Mammary epithelial cell (primary cell): ENCODE measurements at regions of chr10 and their contacts with region 1.

Region 1: GRCh38 chr10:21173812-21174714 is 277.0 kb upstream of the NEBL start:
- DNase-seq: peak; percentile 83
- H3K4me3 ChIP-seq: peak overlapping the region; percentile 55 to 70 (median 64)
- H3K27ac ChIP-seq: peak overlapping the region; percentile 27
- H3K4me1 ChIP-seq: peaks cover 15% of the 10 kb centered on the region
- H3K27me3 ChIP-seq: no peaks in the 10 kb centered on the region
- CTCF ChIP-seq: peak in 1 of 2 donors; percentile 3

Region 2: DNA sequence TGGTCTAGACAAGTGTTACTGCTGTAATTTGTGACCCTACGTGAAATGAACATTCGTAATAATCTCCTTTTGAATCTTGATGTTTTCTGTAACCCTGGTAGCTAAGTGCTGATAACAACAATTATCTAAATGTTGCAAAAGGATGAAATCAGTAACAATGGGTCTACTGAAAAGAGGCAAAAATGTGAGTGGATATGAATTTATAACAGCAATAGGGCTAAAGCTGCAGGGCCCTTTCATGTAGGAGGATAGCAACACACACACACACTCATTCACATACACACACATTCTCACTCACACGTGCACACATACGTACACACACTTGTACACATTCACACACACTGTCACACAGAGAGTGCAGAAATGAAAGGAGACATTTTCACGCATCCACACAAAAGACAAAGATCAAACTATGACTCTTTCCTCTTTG is 76.1 kb before region 1 on chr10:
- CTCF ChIA-PET with region 1: no interaction called
- dilution Hi-C with region 1: no loop called
- in situ Hi-C with region 1: no loop called
- intact Hi-C with region 1: loop called (anchors 2 kb)
- DNase-seq: no peak
- H3K4me3 ChIP-seq: no peak overlapping the region
- H3K27ac ChIP-seq: no peak overlapping the region
- H3K4me1 ChIP-seq: peaks cover 3% of the 10 kb centered on the region
- H3K27me3 ChIP-seq: no peaks in the 10 kb centered on the region
- CTCF ChIP-seq: no peak

Region 3: DNA sequence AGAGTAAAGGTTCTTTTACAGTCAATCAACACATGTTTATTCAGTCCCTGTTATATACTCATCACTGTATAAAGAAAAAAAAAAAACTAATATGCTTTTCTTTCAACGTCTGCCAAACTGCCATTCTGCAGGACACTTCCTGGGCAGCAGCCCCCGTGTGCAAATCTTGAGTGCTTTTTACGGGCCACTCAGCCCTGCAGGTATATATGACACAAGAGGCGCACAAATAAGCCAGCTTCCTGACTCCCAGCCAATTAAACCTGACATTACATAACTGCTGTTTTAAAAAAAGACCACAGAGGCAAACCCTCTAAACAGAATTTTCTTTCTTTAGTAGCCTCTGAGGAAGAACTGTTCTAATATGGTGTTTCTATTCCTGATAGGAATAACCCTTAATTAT is 13.9 kb before region 1 on chr10:
- CTCF ChIA-PET with region 1: no interaction called
- dilution Hi-C with region 1: no loop called
- in situ Hi-C with region 1: no loop called
- intact Hi-C with region 1: no loop called
- DNase-seq: no peak
- H3K4me3 ChIP-seq: no peak overlapping the region
- H3K27ac ChIP-seq: no peak overlapping the region
- H3K4me1 ChIP-seq: no peaks in the 10 kb centered on the region
- H3K27me3 ChIP-seq: peaks cover 2% of the 10 kb centered on the region
- CTCF ChIP-seq: no peak

Region 4: GRCh38 chr10:21265621-21266020 is 91.6 kb after region 1 on chr10:
- CTCF ChIA-PET with region 1: no interaction called
- dilution Hi-C with region 1: no loop called
- in situ Hi-C with region 1: loop called in 1 of 2 experiments (anchors 5 kb)
- intact Hi-C with region 1: loop called (anchors 5 kb)
- DNase-seq: peak; percentile 83
- H3K4me3 ChIP-seq: no peak overlapping the region
- H3K27ac ChIP-seq: peak overlapping the region; percentile 6
- H3K4me1 ChIP-seq: peaks cover 19% of the 10 kb centered on the region
- H3K27me3 ChIP-seq: no peaks in the 10 kb centered on the region
- CTCF ChIP-seq: no peak

Region 5: DNA sequence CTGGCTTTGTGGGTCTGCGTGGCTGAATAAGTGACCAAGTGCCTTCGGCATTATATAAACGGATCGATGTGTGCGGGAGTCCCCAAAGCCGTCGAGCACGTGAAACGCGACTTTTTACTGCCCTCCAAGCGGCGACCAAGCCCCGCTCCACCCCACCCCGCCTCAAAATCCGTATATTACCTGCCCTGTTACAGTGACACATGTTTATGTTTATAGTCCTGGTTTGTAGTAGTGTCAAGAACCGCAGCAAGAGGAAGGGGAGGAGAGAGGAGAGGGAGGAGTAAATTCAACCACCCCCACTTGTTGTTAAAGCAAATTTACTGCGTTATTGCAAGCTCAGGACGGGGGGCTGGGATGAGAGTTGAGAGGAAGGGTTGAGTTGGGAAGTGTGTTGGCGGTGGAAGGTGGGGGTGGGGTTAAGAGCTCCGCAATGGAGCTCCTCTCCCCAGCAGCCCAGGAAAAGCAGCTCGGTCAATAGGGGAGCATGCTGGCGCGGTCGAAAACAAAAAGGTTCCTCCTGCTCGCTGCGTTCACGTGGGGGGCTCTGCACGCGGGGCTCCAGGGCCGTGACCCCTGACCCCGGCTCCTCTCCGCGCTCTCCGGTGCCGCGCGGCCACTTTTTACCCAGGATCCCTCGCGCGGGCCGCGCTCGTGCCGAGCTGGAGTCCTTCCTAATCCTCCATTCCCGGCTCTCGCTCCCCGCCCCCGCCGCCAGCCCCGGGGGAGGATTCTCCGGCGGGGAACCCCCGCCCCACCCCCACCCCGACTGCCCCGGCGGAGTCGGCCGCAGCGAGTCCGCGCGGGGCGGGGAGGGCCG is 351.5 kb after region 1 on chr10 and contains the start of gene SKIDA1:
- CTCF ChIA-PET with region 1: no interaction called
- dilution Hi-C with region 1: no loop called
- in situ Hi-C with region 1: no loop called
- intact Hi-C with region 1: loop called (anchors 10 kb)
- DNase-seq: peak; percentile 78
- H3K4me3 ChIP-seq: peak within 1 kb of the TSS; percentile 54 to 75 (median 68)
- H3K27ac ChIP-seq: peak within 1 kb of the TSS; percentile 92
- H3K4me1 ChIP-seq: peaks cover 22% of the 10 kb centered on the region
- H3K27me3 ChIP-seq: no peaks in the 10 kb centered on the region
- CTCF ChIP-seq: no peak
- total RNA-seq, gene SKIDA1: 1.3 to 1.5 TPM